Mammary epithelial cell (primary cell): ENCODE measurements at regions of chr3 and their contacts with region 1.

Region 1: GRCh38 chr3:84074767-84075166 is 884.0 kb upstream of the CADM2 start:
- DNase-seq: peak; percentile 65
- H3K4me3 ChIP-seq: no peak overlapping the region
- H3K27ac ChIP-seq: no peak overlapping the region
- H3K4me1 ChIP-seq: no peaks in the 10 kb centered on the region
- H3K27me3 ChIP-seq: no peaks in the 10 kb centered on the region
- CTCF ChIP-seq: no peak

Region 2: GRCh38 chr3:83877910-83878309 is 196.9 kb before region 1 on chr3:
- CTCF ChIA-PET with region 1: no interaction called
- dilution Hi-C with region 1: no loop called
- in situ Hi-C with region 1: no loop called
- intact Hi-C with region 1: no loop called
- DNase-seq: no peak
- H3K4me3 ChIP-seq: no peak overlapping the region
- H3K27ac ChIP-seq: no peak overlapping the region
- H3K4me1 ChIP-seq: no peaks in the 10 kb centered on the region
- H3K27me3 ChIP-seq: no peaks in the 10 kb centered on the region
- CTCF ChIP-seq: no peak

Region 3: GRCh38 chr3:84136425-84136824 is 61.7 kb after region 1 on chr3:
- CTCF ChIA-PET with region 1: no interaction called
- dilution Hi-C with region 1: no loop called
- in situ Hi-C with region 1: no loop called
- intact Hi-C with region 1: loop called (anchors 1 kb)
- DNase-seq: peak; percentile 8
- H3K4me3 ChIP-seq: no peak overlapping the region
- H3K27ac ChIP-seq: no peak overlapping the region
- H3K4me1 ChIP-seq: no peaks in the 10 kb centered on the region
- H3K27me3 ChIP-seq: no peaks in the 10 kb centered on the region
- CTCF ChIP-seq: peak; percentile 53 to 59